Head of caudate nucleus (tissue), 42 donors: ENCODE measurements at regions of chr7 and their contacts with region 1.

Region 1: DNA sequence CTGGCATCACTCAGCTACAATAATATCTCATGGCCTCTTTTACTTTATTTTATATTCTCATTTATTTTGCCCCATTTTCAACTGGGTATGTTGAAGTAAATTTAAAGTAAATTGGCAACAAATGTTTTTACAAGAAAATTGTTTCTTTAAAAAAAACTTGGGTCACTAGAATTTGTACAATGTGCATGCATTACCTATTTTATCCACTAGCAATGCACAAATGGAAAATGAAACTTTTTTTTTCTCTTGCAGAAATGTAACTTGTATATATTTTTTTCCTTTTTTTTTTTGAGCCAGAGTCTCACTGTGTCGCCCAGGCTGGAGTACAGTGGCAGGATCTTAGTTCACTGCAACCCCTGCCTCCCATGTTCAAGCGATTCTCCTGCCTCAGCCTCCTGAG is 10.3 kb upstream of the H2AZ2 start:
- DNase-seq: no peak

Region 2: GRCh38 chr7:44894888-44895580 is 36.9 kb after region 1 on chr7:
- intact Hi-C with region 1: no loop called
- DNase-seq: peak in 39 of 42 donors; percentile 32 to 87 (median 62)

Region 3: DNA sequence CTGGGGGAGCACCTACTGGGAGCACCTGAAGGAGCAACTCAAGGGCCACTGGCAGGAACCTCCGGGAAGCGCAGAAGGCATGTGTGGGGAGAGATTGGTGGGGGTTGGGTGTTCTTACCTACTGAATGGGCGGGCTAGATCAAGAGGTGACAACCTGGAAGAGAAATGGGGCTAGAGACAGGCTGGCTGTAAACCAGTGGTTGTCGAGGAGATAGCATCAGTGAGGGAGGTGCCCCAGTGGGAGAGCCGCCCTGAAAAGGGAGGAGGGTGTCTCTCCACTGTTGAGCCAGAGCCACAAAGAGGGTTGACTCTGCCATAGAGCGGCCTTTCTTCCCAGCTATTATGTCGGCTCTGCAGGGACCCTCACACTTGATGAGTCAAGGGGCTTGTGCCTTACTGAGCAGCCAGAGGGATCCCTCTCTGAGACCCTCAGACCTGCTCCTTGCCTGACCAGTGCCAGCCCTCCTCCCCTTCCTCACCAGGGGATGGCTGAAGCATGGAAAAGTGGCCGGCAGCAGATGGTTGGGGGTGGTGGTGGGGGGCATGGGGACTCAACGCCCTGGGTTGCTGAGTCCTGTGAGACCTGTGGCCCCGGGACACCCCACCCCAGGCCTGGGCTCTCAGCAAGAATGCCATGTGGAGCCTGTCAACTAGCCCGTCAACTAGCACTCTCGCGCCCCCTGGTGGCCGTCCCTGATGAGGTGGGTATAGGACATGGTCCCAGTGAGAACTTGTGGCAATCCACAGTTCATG is 63.6 kb after region 1 on chr7:
- intact Hi-C with region 1: loop called (anchors 2 kb)
- DNase-seq: peak; percentile 77 to 99 (median 94)